Upper lobe of right lung (tissue), 1 donor: ENCODE measurements at regions of chr15 and their contacts with region 1.

Region 1: DNA sequence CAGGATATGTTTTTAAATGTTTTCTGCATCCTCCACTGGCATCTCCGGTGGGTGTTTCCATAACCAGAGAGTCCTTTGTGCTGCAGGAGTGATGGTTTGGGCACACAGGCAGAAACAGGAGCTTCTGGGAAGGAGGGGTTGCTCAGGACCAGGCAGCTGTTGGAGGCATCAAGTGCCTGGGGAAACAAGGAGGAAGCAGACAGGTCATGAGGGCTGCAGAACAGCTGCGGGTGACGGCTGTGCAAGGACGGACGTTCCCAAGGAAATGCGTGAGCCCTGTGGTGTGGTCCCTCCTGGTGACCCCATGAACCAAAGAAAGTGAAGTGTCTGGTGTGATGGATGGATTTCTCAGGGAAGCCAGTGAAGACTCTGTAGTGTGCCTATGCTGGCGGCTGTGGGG is 61.2 kb upstream of the TNFAIP8L3 start:
- DNase-seq: no peak
- ATAC-seq: no peak
- H3K4me3 ChIP-seq: no peak overlapping the region
- H3K27ac ChIP-seq: no peak overlapping the region
- H3K4me1 ChIP-seq: no peaks in the 10 kb centered on the region
- H3K27me3 ChIP-seq: no peaks in the 10 kb centered on the region
- CTCF ChIP-seq: no peak

Region 2: DNA sequence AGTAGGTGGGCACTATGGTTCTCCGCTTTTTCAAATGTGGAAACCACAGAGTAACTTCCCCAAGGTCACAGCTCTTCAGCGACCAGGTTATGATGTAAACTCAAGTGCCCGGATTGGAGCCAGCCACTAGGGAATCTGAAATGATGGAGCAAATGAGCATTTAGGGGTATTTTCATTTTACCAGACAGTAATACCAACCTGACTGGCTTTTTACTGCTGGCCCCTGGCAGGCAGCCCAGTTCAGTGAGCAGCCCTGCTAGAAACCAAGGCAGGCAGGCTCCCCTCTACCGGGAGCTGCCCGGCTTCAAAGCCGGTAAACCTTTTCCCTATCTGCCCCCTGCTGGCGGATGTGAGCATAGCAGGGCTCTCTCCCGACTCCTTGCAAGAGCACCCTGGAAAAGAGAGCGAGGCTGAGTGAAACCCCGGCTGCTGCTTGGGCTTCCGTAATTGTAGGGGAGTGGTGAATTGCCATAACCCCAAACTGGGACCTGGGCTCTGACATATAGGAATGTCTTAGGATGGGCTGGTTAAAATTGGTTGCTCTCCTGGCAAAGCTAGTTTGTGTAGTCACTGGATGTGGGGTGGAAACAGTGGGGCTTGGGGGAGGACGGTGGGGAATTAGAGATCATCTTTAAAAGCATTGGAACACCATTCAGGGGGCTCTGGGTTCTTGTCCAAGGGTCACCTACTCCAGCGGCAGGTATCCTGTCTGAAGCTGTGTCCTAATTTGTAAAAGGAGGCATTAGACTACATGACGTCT is 36.8 kb after region 1 on chr15:
- intact Hi-C with region 1: loop called (anchors 5 kb)
- DNase-seq: peak; percentile 92
- ATAC-seq: peak; percentile 96
- H3K4me3 ChIP-seq: no peak overlapping the region
- H3K27ac ChIP-seq: no peak overlapping the region
- H3K4me1 ChIP-seq: peaks cover 10% of the 10 kb centered on the region
- H3K27me3 ChIP-seq: no peaks in the 10 kb centered on the region
- CTCF ChIP-seq: peak; percentile 97